Activated T-helper 2 cell treated with anti-CD3 and anti-CD28 coated beads, Interferon-gamma antibody, Interleukin-2, Interleukin-4, amounts not matched to agents 10 μg/mL and 5 μg/mL and 100 μg/mL, durations not matched to agents 14 hours and 24 hours and 36 hours (primary cell): ENCODE measurements at regions of chr17 and their contacts with region 1.

Region 1: GRCh38 chr17:8156246-8156992 is 4.2 kb upstream of the PER1 start:
- DNase-seq: peak; percentile 100
- H3K4me3 Mint-ChIP-seq: no peak overlapping the region
- H3K27ac Mint-ChIP-seq: no peak overlapping the region
- H3K4me1 Mint-ChIP-seq: peaks cover 49% of the 10 kb centered on the region
- H3K27me3 Mint-ChIP-seq: no peaks in the 10 kb centered on the region

Region 2: DNA sequence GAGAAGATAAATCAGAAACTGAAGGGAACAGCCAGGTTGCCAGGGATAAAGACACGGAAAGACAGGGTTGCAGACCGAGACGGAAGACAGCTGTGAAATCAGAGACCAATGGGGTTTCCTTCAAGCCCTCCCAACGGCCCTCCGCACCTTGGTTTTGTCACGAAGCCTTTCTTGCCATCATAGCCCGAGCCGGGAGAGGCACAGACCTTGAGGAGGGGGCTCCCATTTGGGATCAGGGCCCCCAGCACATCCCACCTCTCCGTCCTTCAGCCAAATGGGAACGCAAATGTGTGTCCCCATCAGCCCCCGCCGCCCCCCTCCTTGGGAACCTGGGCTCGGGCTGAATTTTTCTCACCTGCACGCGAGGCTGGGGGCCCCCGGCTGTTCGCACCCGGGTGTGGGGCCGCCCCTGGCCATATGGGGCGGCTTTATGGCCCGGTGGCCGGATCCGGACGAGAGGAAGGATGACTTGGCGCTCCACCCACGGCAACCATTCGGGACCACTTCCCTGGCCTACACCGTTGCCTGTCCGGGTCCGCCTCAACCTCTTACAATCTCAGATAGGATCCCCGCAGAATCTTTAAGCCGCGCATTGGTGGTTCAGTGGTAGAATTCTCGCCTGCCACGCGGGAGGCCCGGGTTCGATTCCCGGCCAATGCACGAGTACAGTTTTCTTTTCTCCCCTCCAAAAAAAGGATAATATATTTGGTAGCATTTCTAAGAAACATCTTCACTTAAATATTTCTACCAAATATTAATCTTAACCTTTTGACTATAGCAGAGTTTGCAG is 31.1 kb before region 1 on chr17:
- intact Hi-C with region 1: loop called (anchors 1 kb)
- DNase-seq: peak; percentile 78
- H3K4me3 Mint-ChIP-seq: peak overlapping the region; percentile 87
- H3K27ac Mint-ChIP-seq: peak overlapping the region; percentile 78
- H3K4me1 Mint-ChIP-seq: peaks cover 47% of the 10 kb centered on the region
- H3K27me3 Mint-ChIP-seq: peaks cover 42% of the 10 kb centered on the region

Region 3: GRCh38 chr17:8173056-8173870 is 16.8 kb after region 1 on chr17:
- intact Hi-C with region 1: loop called (anchors 1 kb)
- DNase-seq: peak; percentile 79
- H3K4me3 Mint-ChIP-seq: peak overlapping the region; percentile 86
- H3K27ac Mint-ChIP-seq: peak overlapping the region; percentile 100
- H3K4me1 Mint-ChIP-seq: peaks cover 40% of the 10 kb centered on the region
- H3K27me3 Mint-ChIP-seq: no peaks in the 10 kb centered on the region